Heart left ventricle (tissue), 16 donors: ENCODE measurements at regions of chr10 and their contacts with region 1.

Region 1: DNA sequence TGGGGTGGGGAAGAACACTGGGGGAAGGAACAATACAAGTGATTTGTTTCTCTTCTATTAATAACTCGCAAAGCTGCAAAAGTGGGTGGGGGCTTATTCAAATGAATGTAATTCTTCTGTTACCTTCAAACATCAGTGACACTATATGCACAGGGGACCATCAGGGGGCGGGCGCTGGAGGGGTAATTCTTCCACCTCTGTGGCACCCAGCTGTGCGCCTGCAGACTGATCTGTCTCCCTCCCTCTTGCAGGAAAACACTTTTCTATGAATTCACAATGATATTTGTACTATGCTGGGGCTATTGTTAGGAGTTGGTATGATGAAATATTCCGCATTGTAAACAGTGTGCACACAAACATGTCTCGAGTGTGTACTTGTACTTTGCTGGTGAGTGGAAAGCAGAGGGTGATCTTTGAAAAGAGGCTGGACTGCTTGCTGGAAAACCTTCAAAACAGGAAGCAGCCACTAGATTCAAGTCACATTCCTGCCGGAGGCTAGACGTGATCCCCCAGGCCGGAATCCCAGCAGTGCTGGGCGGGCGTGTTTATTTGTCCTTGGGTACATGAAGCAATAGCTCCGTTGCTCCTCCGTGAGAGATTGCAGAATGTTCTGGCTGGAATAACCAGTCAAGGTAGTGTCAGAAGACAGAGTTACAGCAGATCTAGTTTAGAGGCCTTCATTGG is 15.8 kb upstream of the BNIP3 start:
- DNase-seq: peak in 2 of 5 donors; percentile 72 to 77
- ATAC-seq: peak; percentile 40 to 76 (median 57)
- H3K4me3 ChIP-seq: no peak overlapping the region
- H3K27ac ChIP-seq: peak overlapping the region; percentile 20 to 90 (median 69)
- H3K4me1 ChIP-seq: peaks cover 0 to 43% (median 22%) of the 10 kb centered on the region in 12 donors
- H3K27me3 ChIP-seq: no peaks in the 10 kb centered on the region
- CTCF ChIP-seq: no peak
- POLR2A ChIP-seq: no peak

Region 2: DNA sequence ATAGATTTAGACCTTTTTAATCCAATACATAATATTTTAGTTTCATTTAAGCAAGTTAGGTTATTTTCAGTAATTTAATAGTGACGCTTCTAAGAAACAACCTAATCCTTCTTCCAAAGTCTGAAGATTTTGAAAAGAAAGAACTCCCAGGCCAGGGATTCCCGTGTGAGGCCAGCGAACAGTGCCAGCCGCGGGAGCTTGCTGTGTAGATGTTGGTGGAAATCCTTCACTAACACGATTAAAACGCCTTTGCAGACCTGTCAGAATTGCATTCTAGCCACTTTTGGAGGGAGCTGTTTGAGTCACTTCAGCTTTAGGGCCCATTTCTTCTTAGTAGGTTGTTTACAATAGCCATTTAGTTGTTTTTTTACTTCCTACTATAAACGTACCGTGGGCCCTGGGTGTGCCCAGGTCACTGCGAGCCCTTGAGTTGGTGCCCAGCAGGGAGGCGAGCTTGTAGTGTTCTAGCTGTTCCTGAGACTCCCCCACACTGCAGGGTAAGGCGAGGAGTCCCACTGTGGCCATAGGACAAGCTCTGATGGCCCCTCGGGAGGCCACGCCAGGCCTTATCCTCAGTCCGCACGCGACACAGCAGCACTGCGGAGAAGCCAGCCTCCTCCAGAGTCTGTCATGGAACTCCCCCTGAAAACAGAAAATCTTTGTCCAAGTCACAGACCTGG is 64.4 kb before region 1 on chr10:
- intact Hi-C with region 1: no loop called
- DNase-seq: no peak
- ATAC-seq: no peak
- H3K4me3 ChIP-seq: no peak overlapping the region
- H3K27ac ChIP-seq: peak overlapping the region in 1 of 12 donors; percentile 73
- H3K4me1 ChIP-seq: peaks cover 0 to 86% (median 42%) of the 10 kb centered on the region in 12 donors
- H3K27me3 ChIP-seq: no peaks in the 10 kb centered on the region
- CTCF ChIP-seq: no peak
- POLR2A ChIP-seq: no peak

Region 3: GRCh38 chr10:132011024-132011423 is 13.5 kb after region 1 on chr10:
- intact Hi-C with region 1: loop called in 1 of 10 experiments (anchors 2 kb)
- DNase-seq: peak in 4 of 5 donors; percentile 44 to 67 (median 65)
- ATAC-seq: peak; percentile 48 to 76 (median 63)
- H3K4me3 ChIP-seq: no peak overlapping the region
- H3K27ac ChIP-seq: peak overlapping the region in 11 of 12 donors; percentile 4 to 72 (median 33)
- H3K4me1 ChIP-seq: peaks cover 0 to 28% (median 2%) of the 10 kb centered on the region in 12 donors
- H3K27me3 ChIP-seq: peaks cover 0 to 8% (median 0%) of the 10 kb centered on the region in 9 donors
- CTCF ChIP-seq: no peak
- POLR2A ChIP-seq: no peak

Region 4: GRCh38 chr10:132204781-132205473 is 207.4 kb after region 1 on chr10:
- intact Hi-C with region 1: no loop called
- DNase-seq: peak in 3 of 5 donors; percentile 21 to 52 (median 33)
- ATAC-seq: no peak
- H3K4me3 ChIP-seq: no peak overlapping the region
- H3K27ac ChIP-seq: no peak overlapping the region
- H3K4me1 ChIP-seq: peaks cover 0 to 17% (median 1%) of the 10 kb centered on the region in 12 donors
- H3K27me3 ChIP-seq: no peaks in the 10 kb centered on the region
- CTCF ChIP-seq: no peak
- POLR2A ChIP-seq: no peak

Region 5: DNA sequence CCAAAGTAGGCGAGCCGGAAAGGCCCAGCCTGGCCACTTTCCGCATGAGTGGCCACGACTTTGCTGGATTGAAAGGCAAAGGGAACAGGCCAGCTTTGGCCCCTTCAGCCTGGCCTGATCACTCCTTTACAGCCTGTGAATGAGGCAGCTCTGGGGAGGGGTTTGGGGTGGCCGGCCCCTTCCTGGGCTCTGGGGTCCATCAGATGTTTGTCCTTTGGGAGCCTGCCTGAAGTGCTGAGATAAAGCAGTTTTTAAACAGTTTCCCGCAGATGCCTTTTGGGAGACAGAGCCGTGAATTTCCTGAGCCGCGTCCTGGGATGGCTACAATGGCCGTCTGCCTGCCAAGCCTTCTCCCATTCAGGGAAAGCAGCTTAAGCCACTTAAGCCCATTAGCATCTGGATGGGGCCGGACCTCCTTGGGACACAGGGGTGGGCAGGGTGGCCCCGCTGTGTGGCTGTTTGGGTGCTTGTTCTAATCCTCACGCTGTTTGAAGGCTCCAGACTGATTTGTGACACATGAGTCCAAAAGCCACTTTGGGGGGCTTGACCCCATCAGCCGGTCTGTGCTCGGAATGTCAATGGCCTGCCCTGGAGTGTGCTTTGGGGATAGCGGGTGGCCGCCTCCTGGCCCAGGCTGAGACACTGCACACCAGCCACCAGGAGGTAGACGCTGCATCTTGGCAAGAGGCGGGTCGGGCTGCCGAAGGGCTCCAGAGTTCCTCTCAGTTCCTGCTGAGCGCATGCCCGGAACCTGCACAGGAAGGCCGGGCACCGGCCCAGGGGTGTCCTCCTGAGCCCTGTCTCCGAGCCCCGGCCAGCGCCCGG is 749.5 kb after region 1 on chr10:
- intact Hi-C with region 1: no loop called
- DNase-seq: no peak
- ATAC-seq: no peak
- H3K4me3 ChIP-seq: no peak overlapping the region
- H3K27ac ChIP-seq: peak overlapping the region in 1 of 12 donors; percentile 22
- H3K4me1 ChIP-seq: no peaks in the 10 kb centered on the region
- H3K27me3 ChIP-seq: no peaks in the 10 kb centered on the region
- CTCF ChIP-seq: no peak
- POLR2A ChIP-seq: no peak